ENCODE measurements at regions of chr11 and their contacts with region 1.

Region 1: GRCh38 chr11:117946842-117947526 is 17.8 kb upstream of the TMPRSS13 start:
- DNase-seq: peak; percentile 85
- H3K4me3 ChIP-seq: peak overlapping the region in 1 of 2 experiments; percentile 39; a peak in 1 of 4 replicates
- H3K27ac ChIP-seq: no peak overlapping the region
- H3K4me1 ChIP-seq: no peaks in the 10 kb centered on the region; a peak in 1 of 4 replicates
- H3K27me3 ChIP-seq: no peaks in the 10 kb centered on the region; the same call in 1 of the 2 replicates
- CTCF ChIP-seq: peak; percentile 96
- EP300 ChIP-seq: no peak
- RAD21 ChIP-seq: peak; percentile 99

Region 2: DNA sequence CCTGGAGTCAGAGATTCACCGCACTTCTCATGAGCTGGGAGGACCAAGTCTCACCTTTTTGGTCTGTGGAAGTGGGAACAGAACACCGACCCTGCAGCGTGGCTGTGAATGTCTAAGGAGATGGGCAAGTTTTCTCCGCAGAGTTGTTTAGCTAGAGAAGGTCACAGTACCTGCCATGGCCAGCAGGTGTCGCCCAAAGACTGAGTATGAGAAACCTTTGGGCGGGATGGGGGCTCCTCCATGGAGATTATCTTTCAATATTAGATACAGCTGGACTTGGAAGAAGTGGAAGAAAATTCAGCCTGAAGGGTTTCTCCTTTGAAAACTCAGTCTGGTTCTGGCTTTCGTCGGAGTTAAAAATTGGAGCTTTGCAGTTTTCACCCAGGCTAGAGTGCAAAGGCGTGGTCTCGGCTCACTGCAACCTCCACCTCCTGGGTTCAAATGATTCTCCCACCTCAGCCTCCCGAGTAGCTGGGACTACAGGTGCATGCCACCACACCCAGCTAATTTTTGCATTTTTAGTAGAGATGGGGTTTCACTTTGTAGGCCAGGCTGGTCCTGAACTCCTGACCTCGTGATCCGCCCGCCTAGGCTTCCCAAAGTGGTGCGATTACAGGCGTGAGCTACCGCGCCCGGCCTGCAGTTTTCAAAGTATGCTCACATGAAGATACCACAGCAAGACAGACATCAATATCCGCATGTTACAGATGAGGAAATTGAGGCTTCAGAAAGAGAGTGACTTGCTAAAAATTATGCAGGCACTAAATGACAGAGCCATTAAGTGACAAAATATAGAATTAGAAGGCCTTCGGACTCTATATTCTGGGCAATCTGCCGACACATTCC is 139.3 kb before region 1 on chr11:
- CTCF ChIA-PET with region 1: interaction called, 31 read pairs
- POLR2A ChIA-PET with region 1: no interaction called
- DNase-seq: peak; percentile 79
- H3K4me3 ChIP-seq: no peak overlapping the region; a peak in 1 of 4 replicates
- H3K27ac ChIP-seq: no peak overlapping the region
- H3K4me1 ChIP-seq: peaks cover 0 to 5% of the 10 kb centered on the region in 2 experiments; a peak in 1 of 4 replicates
- H3K27me3 ChIP-seq: peaks cover 12% of the 10 kb centered on the region; the same call in 1 of the 2 replicates
- CTCF ChIP-seq: peak; percentile 92
- EP300 ChIP-seq: no peak
- RAD21 ChIP-seq: peak; percentile 84

Region 3: GRCh38 chr11:117861151-117862018 is 85.6 kb before region 1 on chr11:
- CTCF ChIA-PET with region 1: interaction called, 438 read pairs
- POLR2A ChIA-PET with region 1: no interaction called
- DNase-seq: peak; percentile 74
- H3K4me3 ChIP-seq: no peak overlapping the region
- H3K27ac ChIP-seq: peak overlapping the region in 1 of 2 experiments; percentile 24; a peak in 1 of 4 replicates
- H3K4me1 ChIP-seq: peaks cover 0 to 20% of the 10 kb centered on the region in 2 experiments; a peak in 2 of 4 replicates
- H3K27me3 ChIP-seq: peaks cover 2% of the 10 kb centered on the region; the same call in 1 of the 2 replicates
- CTCF ChIP-seq: no peak
- EP300 ChIP-seq: no peak
- RAD21 ChIP-seq: no peak

Region 4: DNA sequence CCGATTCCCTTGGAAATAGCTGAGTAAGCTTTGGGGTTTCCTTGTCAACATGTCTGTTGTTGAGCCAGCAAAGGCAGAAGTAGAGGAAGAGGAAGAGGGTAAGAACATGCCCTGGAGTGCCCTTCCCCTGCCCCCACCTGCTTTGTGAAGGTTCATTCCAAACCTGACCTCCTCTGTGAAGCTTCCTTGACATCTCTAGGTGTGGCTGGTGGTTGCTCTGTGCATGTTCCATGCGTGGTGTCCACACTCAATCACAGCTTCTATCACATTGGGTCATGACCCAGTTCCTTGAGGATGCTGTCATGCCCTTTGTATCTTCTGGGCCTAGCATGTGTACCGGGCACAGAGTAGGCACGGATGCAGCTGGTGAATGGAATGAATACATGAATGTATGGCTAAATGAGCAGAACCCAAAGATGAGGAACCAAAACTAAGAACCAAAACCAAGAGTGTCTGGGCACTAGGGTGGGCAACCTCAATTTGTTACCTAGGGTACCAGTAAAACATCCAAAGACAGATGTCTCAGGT is 46.8 kb before region 1 on chr11:
- CTCF ChIA-PET with region 1: interaction called, 23 read pairs
- POLR2A ChIA-PET with region 1: no interaction called
- DNase-seq: no peak
- H3K4me3 ChIP-seq: no peak overlapping the region
- H3K27ac ChIP-seq: no peak overlapping the region
- H3K4me1 ChIP-seq: no peaks in the 10 kb centered on the region; a peak in 1 of 4 replicates
- H3K27me3 ChIP-seq: peaks cover 11% of the 10 kb centered on the region; the same call in 1 of the 2 replicates
- CTCF ChIP-seq: no peak
- EP300 ChIP-seq: no peak
- RAD21 ChIP-seq: no peak

Region 5: DNA sequence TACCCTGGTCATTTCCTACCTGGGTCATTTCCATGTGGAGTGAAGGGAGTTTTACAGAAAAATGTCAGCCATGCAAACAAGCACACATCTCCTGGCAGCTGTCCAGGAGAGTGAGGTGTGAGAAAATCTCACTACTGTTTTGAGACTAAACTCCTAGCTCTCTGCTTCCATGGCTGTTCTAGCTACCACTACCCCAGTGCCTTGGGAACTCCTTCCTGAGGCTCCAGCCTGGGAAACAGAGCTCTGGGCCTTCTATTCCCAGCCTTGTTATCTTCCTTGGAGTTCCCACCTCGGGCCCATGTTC is 15.0 kb before region 1 on chr11:
- CTCF ChIA-PET with region 1: interaction called, 129 read pairs
- POLR2A ChIA-PET with region 1: no interaction called
- DNase-seq: no peak
- H3K4me3 ChIP-seq: no peak overlapping the region
- H3K27ac ChIP-seq: no peak overlapping the region
- H3K4me1 ChIP-seq: peaks cover 0 to 5% of the 10 kb centered on the region in 2 experiments; a peak in 1 of 4 replicates
- H3K27me3 ChIP-seq: peaks cover 7% of the 10 kb centered on the region; the same call in 1 of the 2 replicates
- CTCF ChIP-seq: no peak
- EP300 ChIP-seq: no peak
- RAD21 ChIP-seq: no peak

Region 6: GRCh38 chr11:118046051-118046963 is 99.3 kb after region 1 on chr11:
- CTCF ChIA-PET with region 1: interaction called, 173 read pairs
- POLR2A ChIA-PET with region 1: no interaction called
- DNase-seq: no peak
- H3K4me3 ChIP-seq: no peak overlapping the region
- H3K27ac ChIP-seq: no peak overlapping the region
- H3K4me1 ChIP-seq: no peaks in the 10 kb centered on the region
- H3K27me3 ChIP-seq: peaks cover 8% of the 10 kb centered on the region; the same call in 1 of the 2 replicates
- CTCF ChIP-seq: no peak
- EP300 ChIP-seq: no peak
- RAD21 ChIP-seq: no peak

Region 7: DNA sequence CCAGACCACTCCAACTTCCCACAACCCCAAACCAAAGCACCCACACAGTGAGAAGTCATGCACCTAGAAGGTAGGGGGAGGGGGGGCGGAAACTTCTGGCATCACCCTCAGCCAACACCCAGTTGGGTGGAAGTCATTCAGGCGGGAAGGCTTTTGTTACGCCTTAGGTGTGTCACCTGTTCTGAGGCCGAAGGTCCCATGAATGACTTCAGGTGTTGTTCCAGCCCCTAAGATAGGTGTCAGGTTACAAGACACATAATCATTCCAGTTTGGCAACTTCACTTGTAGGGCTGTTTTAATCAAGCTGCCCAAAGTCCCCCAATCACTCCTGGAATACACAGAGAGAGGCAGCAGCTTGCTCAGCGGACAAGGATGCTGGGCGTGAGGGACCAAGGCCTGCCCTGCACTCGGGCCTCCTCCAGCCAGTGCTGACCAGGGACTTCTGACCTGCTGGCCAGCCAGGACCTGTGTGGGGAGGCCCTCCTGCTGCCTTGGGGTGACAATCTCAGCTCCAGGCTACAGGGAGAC is 129.8 kb after region 1 on chr11 and contains the start of gene TMPRSS4:
- CTCF ChIA-PET with region 1: interaction called, 12 read pairs
- POLR2A ChIA-PET with region 1: no interaction called
- DNase-seq: no peak
- H3K4me3 ChIP-seq: no peak within 1 kb of the TSS
- H3K27ac ChIP-seq: no peak within 1 kb of the TSS
- H3K4me1 ChIP-seq: no peaks in the 10 kb centered on the region
- H3K27me3 ChIP-seq: peaks cover 19% of the 10 kb centered on the region; the same call in 1 of the 2 replicates
- CTCF ChIP-seq: no peak
- EP300 ChIP-seq: no peak
- RAD21 ChIP-seq: no peak
- polyA plus RNA-seq, gene TMPRSS4: not detected in 2 replicates

Measured in SK-N-SH (cell line).